ENCODE measurements at regions of chr1 and their contacts with region 1.

Region 1: DNA sequence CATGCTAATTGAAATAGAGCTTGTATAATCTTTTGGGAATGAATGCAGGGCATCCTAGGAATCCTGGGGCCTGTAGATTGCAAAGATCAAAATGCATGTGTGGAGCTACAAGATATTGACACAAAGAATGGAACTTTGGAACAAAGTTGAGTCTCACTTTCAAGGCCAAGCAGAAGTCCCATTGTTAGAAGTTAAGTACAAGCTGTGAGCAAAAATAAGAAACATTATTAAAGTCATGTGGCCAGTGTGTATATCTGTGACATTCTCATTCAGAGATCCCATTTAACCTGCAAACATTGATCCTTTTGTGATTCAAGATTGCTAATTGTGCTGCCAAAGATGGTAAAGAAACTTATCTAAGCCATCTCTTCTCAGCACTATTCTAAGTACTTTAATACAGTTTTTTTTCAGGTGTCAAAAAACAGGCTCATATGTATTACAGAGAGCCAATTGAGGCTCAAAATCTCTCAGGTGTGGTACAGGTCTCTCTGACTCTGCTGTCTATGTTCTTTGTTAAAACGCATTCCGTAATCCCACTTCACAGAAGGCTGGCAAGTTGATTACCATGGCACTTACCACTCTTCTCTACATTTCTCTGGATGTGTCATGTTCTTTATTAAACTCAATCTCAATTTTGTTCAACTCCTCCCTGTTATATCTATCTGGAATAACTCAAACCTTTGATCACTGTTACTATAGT is 704.4 kb upstream of the NEGR1 start:
- DNase-seq: no peak
- ATAC-seq: no peak
- H3K4me3 ChIP-seq: no peak overlapping the region
- H3K27ac ChIP-seq: no peak overlapping the region
- H3K4me1 ChIP-seq: no peaks in the 10 kb centered on the region
- H3K27me3 ChIP-seq: no peaks in the 10 kb centered on the region
- CTCF ChIP-seq: no peak

Region 2: DNA sequence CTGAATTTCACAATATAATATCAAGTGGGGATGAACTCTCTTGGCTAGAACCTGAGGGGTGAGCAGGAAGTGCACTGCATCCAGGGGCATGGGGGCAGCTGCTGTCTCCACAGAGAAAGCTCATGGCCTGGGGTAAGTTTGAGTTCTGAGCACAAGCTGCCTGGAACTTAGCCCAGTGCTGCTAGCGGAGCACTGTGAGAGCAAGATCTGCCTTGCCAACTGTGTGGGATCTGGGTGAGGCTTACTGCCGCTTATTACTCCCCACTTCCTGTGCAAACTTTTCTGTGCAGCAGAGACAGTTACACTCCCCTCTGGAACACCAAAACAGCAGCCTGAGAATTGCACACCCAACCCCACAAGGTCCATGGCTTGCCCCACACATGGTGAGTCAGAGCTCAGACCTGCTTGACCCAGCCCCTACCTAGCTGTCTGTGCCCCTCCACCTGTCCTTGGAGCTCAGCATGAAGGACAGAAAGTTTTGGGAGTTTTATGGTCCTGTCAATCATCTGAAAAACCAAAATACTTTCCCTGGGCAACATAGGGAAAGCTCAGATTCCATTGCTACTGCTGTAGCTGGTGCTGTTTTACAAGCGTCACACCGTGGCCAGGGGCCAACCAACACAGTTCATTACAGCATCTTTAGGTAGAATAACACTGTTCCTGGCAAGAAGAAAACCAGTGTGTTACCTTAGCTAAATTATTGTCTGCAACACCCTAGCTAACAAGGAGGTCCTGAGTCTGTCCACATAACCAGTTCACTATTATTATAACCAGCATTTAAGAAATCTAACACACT is 57.7 kb after region 1 on chr1:
- intact Hi-C with region 1: loop called in 1 of 2 experiments (anchors 10 kb)
- DNase-seq: peak in 1 of 2 donors; percentile 40
- ATAC-seq: no peak
- H3K4me3 ChIP-seq: no peak overlapping the region
- H3K27ac ChIP-seq: no peak overlapping the region
- H3K4me1 ChIP-seq: no peaks in the 10 kb centered on the region
- H3K27me3 ChIP-seq: no peaks in the 10 kb centered on the region
- CTCF ChIP-seq: no peak

Region 3: DNA sequence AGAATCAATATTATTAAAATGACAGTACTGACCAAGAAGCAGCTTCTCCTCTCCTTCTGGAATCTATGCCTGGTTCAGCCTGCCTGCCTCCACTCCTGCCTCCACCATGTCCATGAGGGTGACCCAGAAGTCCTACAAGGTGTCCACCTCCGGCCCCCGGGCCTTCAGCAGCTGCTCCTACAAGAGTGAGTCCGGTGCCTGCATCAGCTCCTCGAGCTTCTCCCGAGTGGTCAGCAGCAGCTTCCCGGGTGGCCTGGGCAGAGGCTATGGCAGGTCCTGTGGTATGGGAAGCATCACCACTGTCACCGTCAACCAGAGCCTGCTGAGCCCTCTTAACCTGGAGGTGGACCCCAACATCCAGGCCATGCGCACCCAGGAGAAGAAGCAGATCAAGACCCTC is 118.0 kb after region 1 on chr1:
- intact Hi-C with region 1: no loop called
- DNase-seq: no peak
- ATAC-seq: no peak
- H3K4me3 ChIP-seq: no peak overlapping the region
- H3K27ac ChIP-seq: no peak overlapping the region
- H3K4me1 ChIP-seq: no peaks in the 10 kb centered on the region
- H3K27me3 ChIP-seq: no peaks in the 10 kb centered on the region
- CTCF ChIP-seq: no peak